Panc1 (cell line): ENCODE measurements at regions of chr7 and their contacts with region 1.

Region 1: DNA sequence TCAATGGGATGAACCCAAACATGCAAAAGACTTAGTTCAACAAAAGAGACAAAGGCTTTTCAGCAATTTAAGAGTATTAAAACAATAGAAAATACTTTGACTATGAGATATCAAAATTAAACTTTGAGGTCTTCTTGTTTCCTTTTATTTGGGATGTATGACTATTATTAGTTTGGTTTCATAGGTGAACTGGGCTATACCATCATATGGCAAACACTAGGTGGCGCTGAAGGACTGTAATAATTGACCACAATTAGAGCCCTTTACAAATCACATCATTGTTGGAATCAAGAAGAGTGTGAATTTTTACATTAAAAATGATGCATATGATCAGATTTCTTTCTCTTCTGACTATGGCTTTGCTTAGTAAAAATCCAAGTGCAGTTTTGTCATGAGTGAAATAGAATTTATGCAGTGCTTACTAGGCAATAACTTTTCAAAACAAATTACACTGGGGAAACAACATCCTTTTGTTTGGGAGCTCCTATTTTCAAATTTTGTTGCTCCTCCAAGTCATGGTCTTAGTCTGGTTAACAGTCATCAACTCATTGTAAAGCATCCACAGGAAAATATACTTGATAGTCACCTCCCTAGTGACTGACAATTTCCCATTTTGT is 14.7 kb upstream of the NXPH1 start:
- DNase-seq: peak; percentile 45
- ATAC-seq: peak; percentile 94
- H3K4me3 ChIP-seq: no peak overlapping the region
- H3K27ac ChIP-seq: no peak overlapping the region
- H3K4me1 ChIP-seq: no peaks in the 10 kb centered on the region
- H3K27me3 ChIP-seq: no peaks in the 10 kb centered on the region
- CTCF ChIP-seq: peak; percentile 74; the same call in 1 of the 2 replicates

Region 2: DNA sequence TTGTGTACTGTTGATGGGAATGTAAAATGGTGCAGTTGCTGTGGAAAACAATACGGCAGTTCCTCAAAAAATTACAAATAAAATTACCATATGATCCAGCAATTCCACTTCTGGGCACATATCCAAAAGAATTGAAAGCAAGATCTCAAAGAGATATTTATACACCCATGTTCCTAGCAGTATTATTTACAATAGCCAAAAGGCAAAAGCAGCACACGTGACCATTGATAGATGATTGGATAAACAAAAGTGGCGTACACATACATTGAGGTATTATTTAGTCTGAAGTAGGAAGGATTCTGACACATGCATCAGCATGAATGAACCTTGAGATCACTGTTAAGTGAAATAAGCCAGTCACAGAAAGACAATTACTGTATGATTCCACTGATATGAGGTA is 14.7 kb before region 1 on chr7:
- CTCF ChIA-PET with region 1: no interaction called
- POLR2A ChIA-PET with region 1: no interaction called
- in situ Hi-C with region 1: no loop called
- intact Hi-C with region 1: no loop called
- DNase-seq: no peak
- ATAC-seq: no peak
- H3K4me3 ChIP-seq: no peak overlapping the region
- H3K27ac ChIP-seq: no peak overlapping the region
- H3K4me1 ChIP-seq: no peaks in the 10 kb centered on the region
- H3K27me3 ChIP-seq: no peaks in the 10 kb centered on the region
- CTCF ChIP-seq: no peak

Region 3: DNA sequence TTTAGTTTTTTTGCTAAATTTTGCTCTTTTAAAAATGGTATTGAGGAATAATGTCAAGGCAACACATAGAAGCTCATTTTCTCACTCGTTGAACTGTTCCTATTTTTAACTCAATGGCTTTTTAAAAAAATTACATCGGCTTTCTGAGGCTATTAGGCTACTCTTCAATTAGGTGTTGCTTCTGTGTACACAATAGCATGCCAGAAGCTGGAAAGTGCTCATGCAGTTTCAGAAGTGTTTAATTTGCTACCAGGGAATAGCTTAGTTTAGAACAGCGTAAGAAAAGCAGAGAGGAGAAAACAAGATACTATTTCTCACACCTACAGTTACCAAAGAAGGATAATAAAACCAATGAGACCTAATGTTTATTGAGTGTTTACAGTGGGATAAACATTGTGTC is 172.1 kb after region 1 on chr7:
- CTCF ChIA-PET with region 1: no interaction called
- POLR2A ChIA-PET with region 1: no interaction called
- in situ Hi-C with region 1: no loop called
- intact Hi-C with region 1: no loop called
- DNase-seq: no peak
- ATAC-seq: no peak
- H3K4me3 ChIP-seq: no peak overlapping the region
- H3K27ac ChIP-seq: no peak overlapping the region
- H3K4me1 ChIP-seq: no peaks in the 10 kb centered on the region
- H3K27me3 ChIP-seq: no peaks in the 10 kb centered on the region
- CTCF ChIP-seq: no peak

Region 4: GRCh38 chr7:8724080-8724718 is 305.5 kb after region 1 on chr7:
- CTCF ChIA-PET with region 1: no interaction called
- POLR2A ChIA-PET with region 1: no interaction called
- in situ Hi-C with region 1: no loop called
- intact Hi-C with region 1: loop called (anchors 5 kb)
- DNase-seq: peak; percentile 20
- ATAC-seq: peak; percentile 74
- H3K4me3 ChIP-seq: no peak overlapping the region
- H3K27ac ChIP-seq: no peak overlapping the region
- H3K4me1 ChIP-seq: no peaks in the 10 kb centered on the region
- H3K27me3 ChIP-seq: no peaks in the 10 kb centered on the region
- CTCF ChIP-seq: peak; percentile 86

Region 5: GRCh38 chr7:10412422-10413019 is 1993.8 kb after region 1 on chr7:
- CTCF ChIA-PET with region 1: no interaction called
- POLR2A ChIA-PET with region 1: no interaction called
- in situ Hi-C with region 1: no loop called
- intact Hi-C with region 1: loop called (anchors 2 kb)
- DNase-seq: peak; percentile 15
- ATAC-seq: peak; percentile 78
- H3K4me3 ChIP-seq: no peak overlapping the region
- H3K27ac ChIP-seq: no peak overlapping the region
- H3K4me1 ChIP-seq: no peaks in the 10 kb centered on the region
- H3K27me3 ChIP-seq: no peaks in the 10 kb centered on the region
- CTCF ChIP-seq: peak; percentile 79; the same call in 1 of the 2 replicates